ENCODE measurements at regions of chr12 and their contacts with region 1.

Region 1: DNA sequence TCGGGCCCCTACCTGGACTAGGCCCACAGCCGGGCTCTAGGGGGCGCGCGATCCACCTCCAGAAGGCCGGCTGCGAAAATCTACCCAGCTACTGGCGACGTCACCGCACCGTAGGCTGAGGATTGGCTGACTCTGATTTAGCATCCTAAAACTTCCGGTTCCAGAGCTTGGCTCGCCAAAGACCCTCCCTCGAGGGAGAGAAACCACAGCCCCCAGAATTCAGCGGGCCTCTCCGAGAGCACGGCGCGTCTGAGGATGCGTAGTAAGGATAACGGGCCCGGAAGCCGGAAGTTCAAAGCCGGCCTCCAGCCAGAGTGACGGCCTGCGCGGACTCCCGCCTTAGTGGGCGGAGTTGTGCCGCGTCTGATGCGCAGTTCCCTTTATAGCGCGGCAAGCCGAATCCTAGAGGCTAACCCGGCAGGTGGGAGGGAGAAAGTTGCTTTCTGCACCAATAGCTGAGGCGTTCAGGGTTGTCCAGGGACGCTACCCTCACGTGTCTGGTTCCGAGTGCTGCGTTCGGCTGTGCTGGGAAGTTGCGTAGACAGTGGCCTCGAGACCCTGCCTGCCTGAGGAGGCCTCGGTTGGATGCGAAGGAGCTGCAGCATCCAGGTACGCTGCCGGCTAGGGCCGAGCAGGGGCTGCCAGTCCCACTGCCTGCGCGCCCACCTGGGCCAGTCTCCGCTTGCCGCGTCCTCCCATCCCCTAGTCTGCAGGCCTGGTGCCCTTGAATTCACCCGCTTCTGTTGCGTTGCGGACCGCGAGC is at the start of gene COX14:
- DNase-seq: peak; percentile 100
- H3K4me3 Mint-ChIP-seq: peak within 1 kb of the TSS; percentile 89
- H3K27ac Mint-ChIP-seq: peak within 1 kb of the TSS; percentile 91
- H3K4me1 Mint-ChIP-seq: peaks cover 36% of the 10 kb centered on the region
- H3K27me3 Mint-ChIP-seq: no peaks in the 10 kb centered on the region
- total RNA-seq, gene COX14: 47.5 to 48.3 TPM

Region 2: DNA sequence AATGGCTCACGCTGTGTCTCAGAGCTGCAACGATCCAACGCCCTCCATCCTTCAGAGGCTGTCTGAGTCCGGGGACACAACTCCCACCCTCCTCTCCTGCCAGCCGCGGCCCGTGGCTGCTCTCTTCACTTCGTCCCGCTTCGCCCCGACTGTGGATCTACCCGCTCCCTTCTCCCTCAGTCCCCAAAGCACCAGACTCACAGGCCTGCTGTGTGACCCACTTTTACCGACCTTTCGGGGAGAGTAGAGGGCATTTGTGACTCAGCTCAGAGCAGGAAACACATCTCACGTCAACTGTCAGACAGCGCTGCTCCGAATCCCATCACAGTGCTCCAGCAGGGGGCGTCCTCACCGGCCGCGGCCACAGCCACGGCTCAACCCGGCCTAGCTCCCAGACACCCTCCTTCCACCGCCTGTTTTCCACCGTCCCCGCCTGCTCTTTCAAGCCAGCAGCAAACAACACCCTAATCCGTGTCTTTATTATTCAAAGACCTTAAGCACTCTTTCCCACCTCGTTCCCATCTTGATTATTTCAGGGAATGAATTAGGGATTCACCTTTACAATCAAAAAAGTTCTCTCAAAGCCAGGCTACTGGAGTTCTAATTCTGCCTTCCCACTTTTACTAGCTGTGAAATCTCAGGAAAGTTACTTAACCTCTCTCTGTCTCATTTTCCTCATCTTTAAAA is 166.3 kb before region 1 on chr12:
- CTCF ChIA-PET with region 1: interaction called, 10 read pairs
- intact Hi-C with region 1: no loop called
- DNase-seq: peak; percentile 94
- H3K4me3 Mint-ChIP-seq: peak overlapping the region; percentile 74
- H3K27ac Mint-ChIP-seq: peak overlapping the region; percentile 83
- H3K4me1 Mint-ChIP-seq: peaks cover 16% of the 10 kb centered on the region
- H3K27me3 Mint-ChIP-seq: no peaks in the 10 kb centered on the region

Region 3: DNA sequence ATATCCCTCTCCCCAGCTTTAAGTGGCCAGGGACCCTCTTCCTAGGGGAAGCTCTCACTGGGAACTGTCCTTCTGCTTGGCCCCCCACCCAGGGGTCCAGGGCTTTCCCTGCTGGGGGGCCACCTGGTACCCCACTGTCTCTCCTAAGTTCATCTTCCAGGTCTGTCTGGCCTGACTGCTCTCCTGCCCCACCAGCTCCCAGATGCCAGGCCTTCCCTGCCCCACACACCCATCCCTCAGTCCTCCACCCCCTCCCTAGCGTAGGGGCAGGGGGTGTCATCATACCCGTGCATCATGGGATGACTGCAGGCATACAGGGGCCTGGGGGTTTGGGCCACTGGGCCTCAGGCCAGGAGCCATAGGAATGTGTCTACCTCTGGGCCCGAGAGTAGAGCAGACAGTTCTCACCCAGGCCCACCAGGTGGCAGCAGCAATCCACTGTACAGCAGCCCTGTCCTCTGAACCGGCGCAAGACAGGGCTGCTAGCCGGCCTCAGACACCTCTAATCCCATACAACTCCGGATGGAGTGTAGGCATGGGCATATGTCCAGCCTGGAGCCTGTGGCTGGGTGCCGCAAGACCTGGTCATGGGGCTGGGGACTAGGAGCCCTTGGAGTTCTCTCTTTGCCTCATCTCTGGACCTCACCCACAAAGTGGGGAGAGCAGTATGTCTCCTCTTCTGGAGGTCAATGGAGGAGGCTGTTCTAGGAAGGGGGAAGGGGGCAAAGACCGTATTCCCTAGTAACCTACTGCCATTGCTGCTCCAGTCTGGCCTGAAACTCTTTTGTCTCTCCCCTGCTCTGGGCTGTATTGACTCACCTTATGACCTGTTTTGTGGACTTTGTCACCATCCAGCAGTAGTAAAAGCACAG is 36.7 kb before region 1 on chr12:
- CTCF ChIA-PET with region 1: interaction called, 19 read pairs
- intact Hi-C with region 1: no loop called
- DNase-seq: peak; percentile 88
- H3K4me3 Mint-ChIP-seq: no peak overlapping the region
- H3K27ac Mint-ChIP-seq: no peak overlapping the region
- H3K4me1 Mint-ChIP-seq: peaks cover 5% of the 10 kb centered on the region
- H3K27me3 Mint-ChIP-seq: no peaks in the 10 kb centered on the region

Region 4: DNA sequence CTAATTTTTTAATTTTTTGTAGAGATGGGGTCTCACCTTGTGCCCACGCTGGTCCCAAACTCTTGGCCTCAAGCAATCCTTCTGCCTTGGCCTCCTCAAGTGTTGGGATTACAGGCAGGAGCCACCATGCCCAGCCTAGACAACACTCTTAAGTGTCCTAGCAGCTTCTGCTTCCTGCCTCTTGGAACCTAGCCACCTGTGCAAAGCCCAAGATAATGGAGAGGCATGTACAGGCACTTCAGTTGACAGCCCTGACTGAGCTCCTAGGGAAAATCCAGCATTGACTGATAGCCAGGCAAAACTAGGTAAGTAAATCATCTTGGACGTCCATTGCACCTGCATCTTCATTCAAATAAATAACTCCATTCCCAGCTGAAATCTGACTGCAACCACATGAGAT is 15.7 kb after region 1 on chr12:
- CTCF ChIA-PET with region 1: interaction called, 59 read pairs
- intact Hi-C with region 1: loop called (anchors 1 kb)
- DNase-seq: no peak
- H3K4me3 Mint-ChIP-seq: no peak overlapping the region
- H3K27ac Mint-ChIP-seq: peak overlapping the region; percentile 26
- H3K4me1 Mint-ChIP-seq: peaks cover 18% of the 10 kb centered on the region
- H3K27me3 Mint-ChIP-seq: no peaks in the 10 kb centered on the region

Region 5: GRCh38 chr12:50167041-50167828 is 55.4 kb after region 1 on chr12 and contains the start of gene CERS5:
- CTCF ChIA-PET with region 1: interaction called, 21 read pairs
- intact Hi-C with region 1: loop called (anchors 1 kb)
- DNase-seq: peak; percentile 98
- H3K4me3 Mint-ChIP-seq: peak within 1 kb of the TSS; percentile 92
- H3K27ac Mint-ChIP-seq: peak within 1 kb of the TSS; percentile 91
- H3K4me1 Mint-ChIP-seq: peaks cover 33% of the 10 kb centered on the region
- H3K27me3 Mint-ChIP-seq: no peaks in the 10 kb centered on the region
- total RNA-seq, gene CERS5: 32.6 to 33.6 TPM

Region 6: DNA sequence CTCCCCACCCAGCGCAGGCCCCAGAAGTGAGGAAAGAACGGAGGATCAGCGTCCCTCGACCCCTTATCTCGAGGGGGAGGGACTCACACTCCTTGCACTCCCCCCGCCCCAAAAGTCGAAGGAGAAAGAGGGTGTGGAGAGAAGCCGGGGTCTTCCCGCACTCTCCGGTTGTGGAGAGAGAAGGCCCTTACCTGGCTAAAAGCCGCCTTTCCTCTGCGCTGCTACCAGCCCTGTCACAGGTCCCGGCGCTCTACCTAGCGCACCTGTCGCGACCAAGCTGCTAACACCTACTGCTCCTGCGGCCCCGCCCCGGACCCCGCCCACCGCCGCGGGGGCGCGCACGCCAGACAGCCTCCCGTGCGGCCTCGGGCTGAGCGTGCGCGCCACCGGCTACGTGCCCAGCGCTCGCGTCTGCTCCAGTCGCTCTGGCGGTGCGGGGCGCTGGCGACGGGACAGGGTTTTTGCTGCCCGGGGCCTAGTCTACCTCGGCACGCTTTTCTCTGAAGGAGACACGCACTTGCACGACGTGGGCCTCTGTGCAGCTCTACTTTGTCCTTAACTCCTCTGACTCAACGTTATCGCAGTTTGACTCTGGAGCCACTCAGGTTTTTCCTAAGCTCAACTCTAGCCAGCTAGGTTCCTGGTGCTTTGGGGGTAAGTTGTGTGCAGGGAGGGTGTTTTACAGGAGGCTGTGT is 171.5 kb after region 1 on chr12 and contains the start of gene LIMA1:
- CTCF ChIA-PET with region 1: interaction called, 3 read pairs
- intact Hi-C with region 1: loop called (anchors 1 kb)
- DNase-seq: peak; percentile 92
- H3K4me3 Mint-ChIP-seq: peak within 1 kb of the TSS; percentile 90
- H3K27ac Mint-ChIP-seq: peak within 1 kb of the TSS; percentile 72
- H3K4me1 Mint-ChIP-seq: peaks cover 13% of the 10 kb centered on the region
- H3K27me3 Mint-ChIP-seq: no peaks in the 10 kb centered on the region
- total RNA-seq, gene LIMA1: 15.9 to 16.5 TPM

Measured in activated naive CD4-positive, alpha-beta T cell treated with anti-CD3 and anti-CD28 coated beads for 36 hours (primary cell).